ENCODE measurements at regions of chr17 and their contacts with region 1.

Region 1: DNA sequence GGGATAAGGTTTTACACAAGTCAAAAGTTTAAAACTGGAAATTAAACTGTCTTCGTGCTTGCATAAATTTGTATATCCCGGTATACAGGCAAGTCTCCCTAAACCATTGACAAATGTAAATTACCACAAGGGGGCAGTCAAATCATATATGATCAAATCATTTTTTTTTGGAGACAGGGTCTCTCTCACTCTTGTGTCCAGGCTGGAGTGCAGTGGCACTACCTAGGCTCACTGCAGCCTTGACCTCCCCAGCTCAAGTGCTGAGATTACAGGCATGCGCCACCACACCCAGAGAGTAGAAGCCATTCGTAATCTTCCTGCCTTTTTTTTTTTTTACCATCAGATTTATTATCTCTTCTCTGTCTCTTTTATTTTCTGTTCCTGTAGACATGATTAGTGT is 18.5 kb downstream of the TOP2A start:
- DNase-seq: no peak
- ATAC-seq: peak in 1 of 2 donors; percentile 55
- H3K4me3 ChIP-seq: no peak overlapping the region
- H3K27ac ChIP-seq: no peak overlapping the region
- H3K4me1 ChIP-seq: no peaks in the 10 kb centered on the region
- H3K27me3 ChIP-seq: no peaks in the 10 kb centered on the region

Region 2: GRCh38 chr17:40417609-40418427 is 18.6 kb after region 1 on chr17 and contains the start of gene TOP2A:
- intact Hi-C with region 1: no loop called
- DNase-seq: peak; percentile 93 to 95 (median 93)
- ATAC-seq: peak; percentile 100
- H3K4me3 ChIP-seq: peak within 1 kb of the TSS; percentile 50
- H3K27ac ChIP-seq: peak within 1 kb of the TSS; percentile 13
- H3K4me1 ChIP-seq: no peaks in the 10 kb centered on the region
- H3K27me3 ChIP-seq: no peaks in the 10 kb centered on the region
- total RNA-seq, gene TOP2A: 0.22 to 5.9 (median 3.2) TPM

Region 3: GRCh38 chr17:40479533-40480480 is 80.6 kb after region 1 on chr17:
- intact Hi-C with region 1: loop called in 1 of 4 experiments (anchors 10 kb)
- DNase-seq: peak in 2 of 3 donors; percentile 12 to 51
- ATAC-seq: no peak
- H3K4me3 ChIP-seq: no peak overlapping the region
- H3K27ac ChIP-seq: no peak overlapping the region
- H3K4me1 ChIP-seq: no peaks in the 10 kb centered on the region
- H3K27me3 ChIP-seq: no peaks in the 10 kb centered on the region

Region 4: GRCh38 chr17:40559954-40560591 is 160.9 kb after region 1 on chr17:
- intact Hi-C with region 1: loop called in 1 of 4 experiments (anchors 10 kb)
- DNase-seq: peak; percentile 87 to 94 (median 94)
- ATAC-seq: peak; percentile 74 to 82
- H3K4me3 ChIP-seq: no peak overlapping the region
- H3K27ac ChIP-seq: peak overlapping the region; percentile 74
- H3K4me1 ChIP-seq: peaks cover 21% of the 10 kb centered on the region
- H3K27me3 ChIP-seq: no peaks in the 10 kb centered on the region